MCF 10A (cell line): ENCODE measurements at regions of chr9 and their contacts with region 1.

Region 1: GRCh38 chr9:101530077-101530711 is 3.5 kb upstream of the RNF20 start:
- DNase-seq: peak; percentile 82
- H3K4me3 Mint-ChIP-seq: no peak overlapping the region
- H3K27ac Mint-ChIP-seq: no peak overlapping the region
- H3K4me1 Mint-ChIP-seq: peaks cover 14% of the 10 kb centered on the region
- H3K27me3 Mint-ChIP-seq: no peaks in the 10 kb centered on the region
- CTCF ChIP-seq: peak; percentile 67

Region 2: GRCh38 chr9:101443364-101443771 is 86.8 kb before region 1 on chr9:
- CTCF ChIA-PET with region 1: interaction called, 26 read pairs
- POLR2A ChIA-PET with region 1: interaction called, 3 read pairs
- intact Hi-C with region 1: no loop called
- DNase-seq: no peak
- H3K4me3 Mint-ChIP-seq: no peak overlapping the region
- H3K27ac Mint-ChIP-seq: no peak overlapping the region
- H3K4me1 Mint-ChIP-seq: peaks cover 9% of the 10 kb centered on the region
- H3K27me3 Mint-ChIP-seq: peaks cover 31% of the 10 kb centered on the region
- CTCF ChIP-seq: no peak

Region 3: DNA sequence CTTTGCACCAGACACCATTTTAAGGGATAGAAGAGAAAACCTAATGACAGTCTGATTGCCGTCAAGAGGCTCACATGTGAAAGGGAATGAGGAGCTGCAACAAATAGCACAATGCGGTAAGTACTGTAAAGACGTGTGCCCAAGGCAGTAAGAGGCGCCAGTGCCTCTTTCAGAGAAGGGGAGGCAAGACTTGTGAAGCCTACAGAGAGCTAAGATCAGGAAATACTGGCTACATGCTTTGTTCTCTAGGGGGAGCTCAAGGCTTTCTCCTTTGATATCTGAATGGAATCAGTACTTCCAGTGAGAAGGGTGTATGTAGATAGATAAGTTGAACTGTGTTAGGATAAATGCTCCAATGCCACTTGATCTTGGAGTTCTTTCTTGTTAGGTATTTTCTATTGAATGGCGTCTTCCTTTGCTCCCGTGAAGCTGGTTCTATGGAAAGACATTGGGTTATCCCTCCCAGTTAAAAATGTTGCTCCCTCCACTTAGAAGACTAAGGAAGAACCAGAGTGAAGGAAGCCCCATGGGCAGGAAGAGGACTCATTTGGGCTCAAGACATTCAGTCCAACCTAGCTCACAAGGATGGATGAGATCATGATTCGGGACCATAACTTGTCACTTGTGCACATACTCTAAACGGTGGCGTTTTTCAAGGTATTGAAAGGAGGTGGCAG is 71.1 kb before region 1 on chr9:
- CTCF ChIA-PET with region 1: interaction called, 751 read pairs
- POLR2A ChIA-PET with region 1: interaction called, 25 read pairs
- intact Hi-C with region 1: loop called (anchors 1 kb)
- DNase-seq: peak; percentile 84
- H3K4me3 Mint-ChIP-seq: no peak overlapping the region
- H3K27ac Mint-ChIP-seq: no peak overlapping the region
- H3K4me1 Mint-ChIP-seq: peaks cover 6% of the 10 kb centered on the region
- H3K27me3 Mint-ChIP-seq: no peaks in the 10 kb centered on the region
- CTCF ChIP-seq: peak; percentile 71

Region 4: DNA sequence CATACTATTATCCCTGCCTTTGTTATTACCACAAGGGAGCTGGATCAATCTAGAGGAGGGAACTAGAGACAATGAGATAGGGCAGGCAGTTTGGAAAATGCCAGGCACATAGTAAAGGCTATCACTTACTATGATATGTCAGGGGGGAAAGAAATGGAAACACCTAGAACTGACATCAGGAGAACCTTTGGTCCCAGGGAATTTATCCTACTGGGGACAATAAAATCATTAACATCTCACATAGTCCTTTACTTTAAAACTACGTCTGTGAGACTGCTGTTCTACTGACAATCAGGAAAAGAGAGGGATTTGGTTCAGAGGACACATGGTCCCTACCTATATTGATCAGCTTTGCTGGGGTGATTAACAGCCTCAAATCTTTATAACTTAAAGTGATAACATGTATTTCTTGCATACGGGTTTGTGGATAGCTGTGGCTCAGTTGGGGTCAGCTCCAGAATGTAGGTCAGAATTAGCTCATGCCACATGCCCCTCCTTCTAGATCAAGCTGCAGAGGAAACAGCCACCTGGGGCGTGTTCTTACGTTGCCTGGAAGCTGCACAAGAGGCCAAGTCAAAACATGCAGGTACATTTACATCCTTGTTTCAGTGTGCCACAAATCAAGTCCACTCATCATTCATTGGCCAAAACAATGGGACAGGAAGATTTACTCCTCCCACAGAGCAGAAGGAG is 50.7 kb before region 1 on chr9:
- CTCF ChIA-PET with region 1: interaction called, 751 read pairs
- POLR2A ChIA-PET with region 1: interaction called, 27 read pairs
- intact Hi-C with region 1: no loop called
- DNase-seq: peak; percentile 92
- H3K4me3 Mint-ChIP-seq: peak overlapping the region; percentile 44
- H3K27ac Mint-ChIP-seq: peak overlapping the region; percentile 60
- H3K4me1 Mint-ChIP-seq: peaks cover 68% of the 10 kb centered on the region
- H3K27me3 Mint-ChIP-seq: no peaks in the 10 kb centered on the region
- CTCF ChIP-seq: no peak

Region 5: GRCh38 chr9:101508211-101508610 is 22.0 kb before region 1 on chr9:
- CTCF ChIA-PET with region 1: interaction called, 18 read pairs
- POLR2A ChIA-PET with region 1: interaction called, 5 read pairs
- intact Hi-C with region 1: no loop called
- DNase-seq: no peak
- H3K4me3 Mint-ChIP-seq: no peak overlapping the region
- H3K27ac Mint-ChIP-seq: no peak overlapping the region
- H3K4me1 Mint-ChIP-seq: no peaks in the 10 kb centered on the region
- H3K27me3 Mint-ChIP-seq: no peaks in the 10 kb centered on the region
- CTCF ChIP-seq: no peak